Right cardiac atrium (tissue), 5 donors: ENCODE measurements at regions of chr7 and their contacts with region 1.

Region 1: GRCh38 chr7:24896031-24896501 is 83.9 kb downstream of the OSBPL3 start:
- DNase-seq: no peak
- ATAC-seq: no peak
- H3K4me3 ChIP-seq: no peak overlapping the region
- H3K27ac ChIP-seq: no peak overlapping the region
- H3K4me1 ChIP-seq: no peaks in the 10 kb centered on the region
- H3K27me3 ChIP-seq: no peaks in the 10 kb centered on the region

Region 2: GRCh38 chr7:25069900-25070443 is 173.9 kb after region 1 on chr7:
- intact Hi-C with region 1: loop called in 1 of 4 experiments (anchors 10 kb)
- DNase-seq: peak in 2 of 3 donors; percentile 37 to 54
- ATAC-seq: peak; percentile 67 to 84
- H3K4me3 ChIP-seq: no peak overlapping the region
- H3K27ac ChIP-seq: no peak overlapping the region
- H3K4me1 ChIP-seq: peaks cover 3% of the 10 kb centered on the region
- H3K27me3 ChIP-seq: no peaks in the 10 kb centered on the region